CD14-positive monocyte (primary cell): ENCODE measurements at regions of chr15 and their contacts with region 1.

Region 1: DNA sequence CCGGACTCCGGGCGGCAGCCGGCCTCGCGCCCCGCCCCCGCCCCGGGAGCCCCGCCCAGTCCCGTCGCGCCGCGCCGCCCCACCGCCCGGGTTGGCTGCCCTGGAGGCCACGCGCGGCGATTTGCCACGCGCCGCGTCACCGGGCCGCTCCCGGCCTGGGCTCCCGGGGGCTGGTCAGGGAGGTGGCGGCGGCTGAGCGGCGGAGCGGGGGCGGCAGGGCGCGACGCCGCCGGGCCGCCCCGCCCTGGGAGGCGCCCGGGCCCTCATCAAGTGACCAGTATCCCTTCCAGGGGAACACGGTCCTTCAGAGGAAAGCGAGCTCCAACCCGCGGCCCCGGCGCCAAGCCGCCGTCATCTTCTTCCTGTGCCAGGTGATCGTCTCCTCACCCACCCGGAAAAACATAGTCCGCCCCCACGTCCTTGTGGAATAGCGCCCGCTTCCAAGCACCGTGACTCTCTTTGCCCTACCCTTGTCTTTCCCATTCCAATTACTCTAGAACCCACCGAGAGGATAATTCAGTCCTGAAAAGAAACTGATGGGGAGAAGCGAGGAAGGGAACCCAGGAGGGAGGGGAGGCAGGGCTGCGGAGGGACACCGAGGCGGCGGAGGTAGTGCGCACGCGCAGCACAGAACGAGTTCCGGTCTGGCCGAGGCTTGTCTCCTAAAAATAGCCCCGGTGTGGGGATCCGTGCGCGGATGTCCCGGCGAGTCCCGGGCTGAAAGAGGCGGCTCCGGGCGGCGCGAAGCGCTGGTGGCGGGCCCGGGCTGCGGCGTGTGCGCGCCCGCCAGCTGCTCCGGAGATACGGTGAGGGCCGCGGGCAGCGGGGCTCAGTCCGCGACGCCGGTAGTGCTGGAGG is at the start of gene MEF2A:
- DNase-seq: peak; percentile 91 to 94 (median 93)
- H3K4me3 ChIP-seq: peak within 1 kb of the TSS; percentile 85 to 98 (median 90)
- H3K4me3 Mint-ChIP-seq: peak within 1 kb of the TSS; percentile 100
- H3K27ac ChIP-seq: peak within 1 kb of the TSS; percentile 99 to 100
- H3K27ac Mint-ChIP-seq: peak within 1 kb of the TSS; percentile 99 to 100 (median 99)
- H3K4me1 ChIP-seq: peaks cover 34 to 56% of the 10 kb centered on the region in 2 donors
- H3K4me1 Mint-ChIP-seq: peaks cover 55% of the 10 kb centered on the region
- H3K27me3 ChIP-seq: no peaks in the 10 kb centered on the region
- H3K27me3 Mint-ChIP-seq: peaks cover 0 to 2% (median 0%) of the 10 kb centered on the region in 3 donors
- CTCF ChIP-seq: no peak
- polyA plus RNA-seq, gene MEF2A: 20.3 to 61.8 (median 33.5) TPM

Region 2: DNA sequence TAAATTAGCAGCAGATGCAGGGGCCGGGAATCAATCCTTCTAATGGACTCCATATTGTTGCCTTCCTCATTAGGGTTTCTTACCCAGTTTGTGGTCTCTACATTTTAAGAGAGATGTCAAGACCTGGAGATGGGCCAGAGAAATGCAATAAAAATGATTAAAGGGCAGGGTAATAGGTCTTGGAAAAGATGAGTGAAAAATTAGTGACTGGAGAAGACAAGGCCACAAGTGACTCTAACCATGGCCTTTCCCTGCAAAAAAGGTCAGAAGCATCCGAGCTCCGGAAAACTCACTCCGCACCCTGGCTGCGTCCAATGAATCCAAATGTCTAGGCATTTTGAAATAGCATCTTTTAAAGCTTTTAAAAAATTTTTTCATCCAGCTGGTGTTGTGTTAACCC is 1452.2 kb before region 1 on chr15:
- intact Hi-C with region 1: no loop called
- DNase-seq: no peak
- H3K4me3 ChIP-seq: no peak overlapping the region
- H3K4me3 Mint-ChIP-seq: no peak overlapping the region
- H3K27ac ChIP-seq: no peak overlapping the region
- H3K27ac Mint-ChIP-seq: no peak overlapping the region
- H3K4me1 ChIP-seq: no peaks in the 10 kb centered on the region
- H3K4me1 Mint-ChIP-seq: no peaks in the 10 kb centered on the region
- H3K27me3 ChIP-seq: no peaks in the 10 kb centered on the region
- H3K27me3 Mint-ChIP-seq: peaks cover under 1 to 4% (median 2%) of the 10 kb centered on the region in 3 donors
- CTCF ChIP-seq: no peak

Region 3: DNA sequence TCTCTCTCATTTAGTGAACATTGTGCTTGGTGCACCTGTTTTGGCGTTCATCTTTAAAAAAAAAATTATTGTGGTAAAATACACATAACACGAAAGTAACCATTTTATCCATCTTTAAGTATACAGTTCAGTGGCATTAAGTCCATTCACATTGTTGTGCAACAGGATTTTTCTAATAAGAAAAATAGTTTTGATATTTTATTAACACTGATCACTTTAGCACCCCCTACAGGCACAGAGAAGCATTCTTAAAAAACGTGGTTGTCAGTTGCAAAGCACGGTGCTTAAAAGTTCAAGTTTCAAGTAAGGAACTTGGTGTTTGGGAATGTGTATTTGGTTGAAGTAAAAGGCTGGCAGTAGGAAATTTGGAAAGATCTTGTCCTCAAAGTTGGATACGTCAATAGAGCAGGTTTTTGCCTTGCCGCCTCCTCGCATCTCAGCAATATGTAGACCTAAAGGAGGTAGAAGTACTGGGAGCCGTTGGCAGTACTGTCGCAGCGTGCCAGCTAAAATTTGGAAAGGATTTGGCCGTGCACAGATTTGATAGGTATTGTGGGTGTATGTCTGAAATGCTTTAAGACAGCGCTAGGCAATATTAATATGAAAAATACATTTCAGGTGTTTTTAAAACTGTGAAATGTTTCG is 203.9 kb before region 1 on chr15:
- intact Hi-C with region 1: no loop called
- DNase-seq: no peak
- H3K4me3 ChIP-seq: no peak overlapping the region
- H3K4me3 Mint-ChIP-seq: no peak overlapping the region
- H3K27ac ChIP-seq: no peak overlapping the region
- H3K27ac Mint-ChIP-seq: no peak overlapping the region
- H3K4me1 ChIP-seq: peaks cover 0 to 4% of the 10 kb centered on the region in 2 donors
- H3K4me1 Mint-ChIP-seq: peaks cover 9% of the 10 kb centered on the region
- H3K27me3 ChIP-seq: no peaks in the 10 kb centered on the region
- H3K27me3 Mint-ChIP-seq: no peaks in the 10 kb centered on the region
- CTCF ChIP-seq: peak; percentile 29

Region 4: DNA sequence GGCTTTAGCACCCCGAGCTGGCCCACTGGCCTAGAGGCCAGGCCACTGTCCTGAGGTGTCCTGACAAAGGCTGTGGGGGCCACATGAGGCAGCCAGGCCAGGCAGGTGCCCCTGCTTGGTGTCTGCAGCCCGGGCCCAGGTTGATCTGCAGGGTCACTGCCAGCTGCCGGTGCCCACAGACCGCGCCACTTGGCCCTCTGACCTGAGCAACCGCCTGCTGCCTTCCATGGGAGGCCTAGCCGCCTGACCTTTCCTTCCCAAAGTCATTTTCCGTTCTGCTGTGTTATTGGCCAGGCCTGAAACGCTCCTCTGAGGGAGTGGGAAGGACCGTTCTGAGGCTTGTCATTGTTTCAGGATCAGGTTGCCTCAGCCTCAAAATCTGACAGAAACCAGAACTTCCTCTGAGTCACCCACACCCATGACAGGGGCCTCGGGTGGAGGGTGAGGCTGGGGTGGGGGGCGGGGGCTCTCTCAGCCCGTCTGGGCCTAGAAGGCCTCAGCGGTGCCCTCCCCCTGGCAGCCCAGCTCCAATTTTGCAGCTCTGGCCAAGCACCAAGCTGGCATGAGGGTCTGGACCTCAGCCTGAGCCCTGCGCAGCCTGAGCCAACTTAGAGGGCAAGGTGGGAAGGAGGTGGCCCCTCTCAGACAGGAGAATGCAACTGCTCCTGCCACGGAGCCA is 140.4 kb before region 1 on chr15:
- intact Hi-C with region 1: loop called in 1 of 2 experiments (anchors 10 kb)
- DNase-seq: peak; percentile 88 to 95 (median 89)
- H3K4me3 ChIP-seq: peak overlapping the region in 1 of 3 experiments; percentile 39
- H3K4me3 Mint-ChIP-seq: peak overlapping the region in 1 of 2 donors; percentile 51
- H3K27ac ChIP-seq: peak overlapping the region; percentile 82 to 90
- H3K27ac Mint-ChIP-seq: peak overlapping the region; percentile 87 to 96 (median 90)
- H3K4me1 ChIP-seq: peaks cover 20% of the 10 kb centered on the region in 2 donors
- H3K4me1 Mint-ChIP-seq: peaks cover 28% of the 10 kb centered on the region
- H3K27me3 ChIP-seq: no peaks in the 10 kb centered on the region
- H3K27me3 Mint-ChIP-seq: peaks cover 2 to 8% (median 6%) of the 10 kb centered on the region in 3 donors
- CTCF ChIP-seq: no peak

Region 5: GRCh38 chr15:99476413-99477222 is 88.9 kb before region 1 on chr15:
- intact Hi-C with region 1: loop called in 1 of 2 experiments (anchors 10 kb)
- DNase-seq: peak; percentile 79 to 94 (median 85)
- H3K4me3 ChIP-seq: peak overlapping the region in 1 of 3 experiments; percentile 44
- H3K4me3 Mint-ChIP-seq: peak overlapping the region; percentile 59 to 69
- H3K27ac ChIP-seq: peak overlapping the region; percentile 61 to 91
- H3K27ac Mint-ChIP-seq: peak overlapping the region; percentile 82 to 96 (median 92)
- H3K4me1 ChIP-seq: peaks cover 70 to 76% of the 10 kb centered on the region in 2 donors
- H3K4me1 Mint-ChIP-seq: peaks cover 79% of the 10 kb centered on the region
- H3K27me3 ChIP-seq: no peaks in the 10 kb centered on the region
- H3K27me3 Mint-ChIP-seq: peaks cover 0 to 4% (median 3%) of the 10 kb centered on the region in 3 donors
- CTCF ChIP-seq: no peak

Region 6: GRCh38 chr15:99536422-99537040 is 29.0 kb before region 1 on chr15:
- intact Hi-C with region 1: no loop called
- DNase-seq: no peak
- H3K4me3 ChIP-seq: no peak overlapping the region
- H3K4me3 Mint-ChIP-seq: no peak overlapping the region
- H3K27ac ChIP-seq: no peak overlapping the region
- H3K27ac Mint-ChIP-seq: no peak overlapping the region
- H3K4me1 ChIP-seq: no peaks in the 10 kb centered on the region
- H3K4me1 Mint-ChIP-seq: no peaks in the 10 kb centered on the region
- H3K27me3 ChIP-seq: no peaks in the 10 kb centered on the region
- H3K27me3 Mint-ChIP-seq: peaks cover 0 to 2% (median 0%) of the 10 kb centered on the region in 3 donors
- CTCF ChIP-seq: no peak

Region 7: GRCh38 chr15:99613887-99614647 is 48.5 kb after region 1 on chr15:
- intact Hi-C with region 1: loop called in 1 of 2 experiments (anchors 1 kb)
- DNase-seq: peak; percentile 63 to 87 (median 72)
- H3K4me3 ChIP-seq: peak overlapping the region in 2 of 3 experiments; percentile 32 to 52
- H3K4me3 Mint-ChIP-seq: peak overlapping the region; percentile 52 to 69
- H3K27ac ChIP-seq: peak overlapping the region; percentile 71 to 90
- H3K27ac Mint-ChIP-seq: peak overlapping the region; percentile 91 to 98 (median 96)
- H3K4me1 ChIP-seq: peaks cover 38 to 41% of the 10 kb centered on the region in 2 donors
- H3K4me1 Mint-ChIP-seq: peaks cover 58% of the 10 kb centered on the region
- H3K27me3 ChIP-seq: no peaks in the 10 kb centered on the region
- H3K27me3 Mint-ChIP-seq: no peaks in the 10 kb centered on the region
- CTCF ChIP-seq: no peak

Region 8: DNA sequence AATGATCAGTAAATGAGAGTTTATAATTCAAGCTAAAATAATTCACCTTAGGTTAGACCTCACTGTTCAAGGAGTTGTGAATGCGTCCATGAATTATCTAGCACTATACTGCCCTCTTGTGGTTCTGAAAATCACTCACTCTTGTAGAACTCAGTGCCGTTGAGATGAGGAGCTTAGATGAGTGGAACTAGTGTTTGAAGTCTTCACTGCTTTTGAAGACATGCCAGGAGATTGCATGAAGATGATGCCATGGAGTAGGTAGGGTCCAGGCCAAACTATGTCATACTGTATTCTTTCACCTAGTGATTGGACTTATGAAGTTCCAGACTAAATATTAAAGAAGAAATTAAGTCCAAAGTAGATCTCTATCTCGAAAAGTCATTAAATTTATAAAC is 138.9 kb after region 1 on chr15:
- intact Hi-C with region 1: loop called in 1 of 2 experiments (anchors 2 kb)
- DNase-seq: peak; percentile 64 to 84 (median 77)
- H3K4me3 ChIP-seq: no peak overlapping the region
- H3K4me3 Mint-ChIP-seq: no peak overlapping the region
- H3K27ac ChIP-seq: no peak overlapping the region
- H3K27ac Mint-ChIP-seq: peak overlapping the region in 5 of 7 donors; percentile 49 to 88 (median 78)
- H3K4me1 ChIP-seq: peaks cover 11 to 16% of the 10 kb centered on the region in 2 donors
- H3K4me1 Mint-ChIP-seq: peaks cover 19% of the 10 kb centered on the region
- H3K27me3 ChIP-seq: no peaks in the 10 kb centered on the region
- H3K27me3 Mint-ChIP-seq: no peaks in the 10 kb centered on the region
- CTCF ChIP-seq: peak; percentile 69